ENCODE measurements at regions of chr1 and their contacts with region 1.

Region 1: DNA sequence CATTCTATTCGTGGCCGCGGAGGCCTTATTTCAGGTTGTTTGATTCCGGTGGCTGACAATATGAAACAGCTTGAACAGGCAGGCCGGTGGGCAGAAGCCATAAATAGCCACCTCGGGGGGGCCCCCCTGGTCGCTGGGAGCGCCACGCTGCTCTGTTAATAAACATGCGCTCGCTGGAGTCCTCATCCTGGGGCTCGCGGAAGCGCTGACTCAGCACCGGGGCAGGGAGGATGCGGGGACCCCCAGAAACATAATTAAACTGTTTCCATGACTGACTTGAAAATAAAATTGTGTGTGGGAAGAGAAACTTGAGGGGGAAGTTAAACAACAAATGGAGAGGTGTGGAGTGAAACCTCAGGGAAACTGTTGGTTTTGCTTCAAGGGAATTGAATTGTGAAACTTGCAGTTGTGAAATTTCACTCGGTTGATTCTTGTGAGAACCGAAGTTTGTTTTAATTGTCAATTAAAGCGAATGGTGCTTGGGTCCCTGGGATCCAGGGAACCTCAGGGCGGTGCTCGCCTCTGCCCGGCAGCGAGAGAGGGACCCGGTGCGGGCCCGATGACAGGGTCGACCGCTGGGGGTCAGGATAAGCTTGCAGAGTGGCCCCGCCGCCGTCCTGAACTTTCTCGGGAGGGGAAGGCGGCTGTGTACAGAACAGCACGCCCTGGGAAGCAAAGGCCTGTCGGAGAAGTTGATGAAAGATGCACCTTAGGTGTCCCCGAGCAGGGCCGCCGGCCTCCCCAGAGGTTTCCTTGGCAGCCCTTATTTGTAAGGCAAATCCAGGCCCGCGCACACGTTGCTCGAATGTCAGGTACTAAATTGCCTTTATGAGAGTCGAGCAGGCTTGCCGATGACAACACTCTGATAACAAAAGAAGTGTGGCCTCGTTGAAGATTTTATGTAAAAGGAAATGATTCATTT is 176.9 kb upstream of the LMO4 start:
- DNase-seq: peak; percentile 78 to 80
- ATAC-seq: peak; percentile 90 to 97 (median 94)
- H3K4me3 ChIP-seq: peak overlapping the region; percentile 6 to 45 (median 38)
- H3K27ac ChIP-seq: peak overlapping the region in 9 of 10 donors; percentile 3 to 71 (median 59)
- H3K4me1 ChIP-seq: peaks cover 2 to 44% (median 23%) of the 10 kb centered on the region in 9 donors
- H3K27me3 ChIP-seq: no peaks in the 10 kb centered on the region
- CTCF ChIP-seq: peak in 8 of 9 donors; percentile 43 to 79 (median 64)

Region 2: GRCh38 chr1:87279966-87280535 is 128.3 kb after region 1 on chr1:
- intact Hi-C with region 1: loop called in 4 of 10 experiments (anchors 5 to 10 kb)
- DNase-seq: no peak
- ATAC-seq: peak in 1 of 8 donors; percentile 17
- H3K4me3 ChIP-seq: no peak overlapping the region
- H3K27ac ChIP-seq: peak overlapping the region; percentile 28 to 78 (median 66)
- H3K4me1 ChIP-seq: peaks cover 0 to 25% (median 4%) of the 10 kb centered on the region in 9 donors
- H3K27me3 ChIP-seq: no peaks in the 10 kb centered on the region
- CTCF ChIP-seq: no peak

Region 3: DNA sequence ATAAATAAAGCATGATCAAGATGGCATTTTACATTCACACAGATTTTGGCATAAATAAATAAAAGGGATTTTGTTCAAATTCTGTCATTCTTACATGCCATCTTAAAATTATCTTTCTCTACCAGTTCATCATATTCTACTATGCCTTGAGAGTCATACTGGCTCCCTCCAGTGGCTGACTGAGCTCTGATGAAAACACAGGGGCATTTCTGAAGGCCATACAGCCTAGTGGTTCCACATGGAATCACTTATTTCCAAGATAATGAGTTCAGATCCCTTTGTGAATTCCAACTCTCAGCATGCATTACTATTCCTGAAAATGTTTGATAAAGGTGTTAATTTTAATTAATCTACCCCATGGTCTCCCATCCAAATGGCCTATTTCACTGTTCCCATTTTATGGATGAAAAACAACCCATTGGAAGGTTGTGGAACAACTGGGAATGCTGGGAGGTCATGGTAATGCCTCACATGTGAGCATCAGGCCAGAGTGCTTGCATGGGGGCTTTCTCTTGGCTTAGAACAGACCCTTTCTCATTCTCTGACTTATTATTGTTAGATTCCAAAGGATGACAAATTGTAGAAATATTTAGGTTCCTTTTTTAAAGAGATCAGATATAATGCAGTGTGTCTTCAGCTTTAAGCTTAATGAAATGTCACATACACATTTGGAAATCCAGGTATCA is 909.9 kb after region 1 on chr1:
- intact Hi-C with region 1: loop called in 1 of 10 experiments (anchors 10 kb)
- DNase-seq: peak in 1 of 2 donors; percentile 29
- ATAC-seq: peak in 6 of 8 donors; percentile 55 to 91 (median 60)
- H3K4me3 ChIP-seq: no peak overlapping the region
- H3K27ac ChIP-seq: no peak overlapping the region
- H3K4me1 ChIP-seq: no peaks in the 10 kb centered on the region
- H3K27me3 ChIP-seq: no peaks in the 10 kb centered on the region
- CTCF ChIP-seq: peak in 8 of 9 donors; percentile 44 to 71 (median 66)

Measured in heart right ventricle (tissue), 16 donors.